Activated CD8-positive, alpha-beta T cell treated with anti-CD3 and anti-CD28 coated beads for 36 hours (primary cell): ENCODE measurements at regions of chr1 and their contacts with region 1.

Region 1: DNA sequence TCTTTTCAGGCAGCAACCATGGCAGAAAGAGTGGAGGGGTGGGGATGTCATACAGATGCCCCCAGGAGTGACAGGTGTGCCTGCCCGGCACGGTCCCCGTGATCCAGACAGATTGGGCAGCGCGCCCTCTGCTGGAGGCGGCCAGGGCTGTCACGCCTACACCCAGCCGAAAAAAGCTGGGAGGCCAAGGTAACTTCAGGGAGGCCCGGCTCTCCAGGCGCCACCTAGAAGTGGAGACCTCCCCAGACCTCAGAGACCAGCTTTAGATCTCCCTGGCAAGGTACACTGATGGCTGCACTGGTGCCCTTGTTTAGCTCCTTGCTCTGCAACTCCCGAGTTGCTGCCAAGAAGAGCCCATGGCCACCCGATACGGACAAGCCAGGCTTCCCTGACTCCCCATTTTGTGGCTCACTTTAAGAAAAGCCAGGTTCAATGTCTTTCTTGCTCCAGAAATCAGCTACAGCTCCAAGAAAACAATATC is 6.6 kb downstream of the GOLT1A start:
- DNase-seq: peak; percentile 86
- ATAC-seq: peak; percentile 98
- H3K4me3 Mint-ChIP-seq: no peak overlapping the region
- H3K27ac Mint-ChIP-seq: no peak overlapping the region
- H3K4me1 Mint-ChIP-seq: peaks cover 5% of the 10 kb centered on the region
- H3K27me3 Mint-ChIP-seq: peaks cover 22% of the 10 kb centered on the region
- CTCF ChIP-seq: peak; percentile 96

Region 2: DNA sequence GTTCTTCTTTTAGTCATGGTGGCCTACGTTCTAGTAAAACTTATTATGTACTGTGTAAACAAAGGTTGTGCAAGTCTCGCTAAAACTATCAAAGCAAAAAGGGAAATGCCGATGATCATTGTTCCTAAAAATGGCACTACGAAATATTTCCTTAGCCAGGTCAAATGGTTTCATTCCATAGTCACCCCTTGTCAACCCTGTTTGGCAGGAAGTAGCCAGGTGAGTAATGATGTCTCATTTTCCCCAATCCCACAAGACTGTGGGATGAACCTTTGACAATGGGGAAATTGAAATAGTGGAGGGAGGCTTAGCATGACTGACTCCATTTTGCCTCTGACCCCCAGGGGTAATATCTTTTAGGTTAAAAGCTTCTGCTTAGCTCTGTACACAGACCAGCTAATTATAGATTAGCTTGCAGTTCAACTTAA is 35.4 kb before region 1 on chr1:
- CTCF ChIA-PET with region 1: interaction called, 33 read pairs
- POLR2A ChIA-PET with region 1: no interaction called
- intact Hi-C with region 1: no loop called
- DNase-seq: no peak
- ATAC-seq: no peak
- H3K4me3 Mint-ChIP-seq: no peak overlapping the region
- H3K27ac Mint-ChIP-seq: no peak overlapping the region
- H3K4me1 Mint-ChIP-seq: no peaks in the 10 kb centered on the region
- H3K27me3 Mint-ChIP-seq: peaks cover 6% of the 10 kb centered on the region
- CTCF ChIP-seq: no peak

Region 3: GRCh38 chr1:204219971-204220608 is 12.9 kb after region 1 on chr1:
- CTCF ChIA-PET with region 1: interaction called, 25 read pairs
- POLR2A ChIA-PET with region 1: no interaction called
- intact Hi-C with region 1: no loop called
- DNase-seq: no peak
- ATAC-seq: no peak
- H3K4me3 Mint-ChIP-seq: no peak overlapping the region
- H3K27ac Mint-ChIP-seq: no peak overlapping the region
- H3K4me1 Mint-ChIP-seq: peaks cover 6% of the 10 kb centered on the region
- H3K27me3 Mint-ChIP-seq: no peaks in the 10 kb centered on the region
- CTCF ChIP-seq: no peak

Region 4: GRCh38 chr1:204323887-204324286 is 116.7 kb after region 1 on chr1:
- CTCF ChIA-PET with region 1: interaction called, 24 read pairs
- POLR2A ChIA-PET with region 1: no interaction called
- intact Hi-C with region 1: no loop called
- DNase-seq: peak; percentile 86
- ATAC-seq: peak; percentile 99
- H3K4me3 Mint-ChIP-seq: no peak overlapping the region
- H3K27ac Mint-ChIP-seq: peak overlapping the region; percentile 70
- H3K4me1 Mint-ChIP-seq: peaks cover 24% of the 10 kb centered on the region
- H3K27me3 Mint-ChIP-seq: peaks cover 2% of the 10 kb centered on the region
- CTCF ChIP-seq: no peak